Dorsolateral prefrontal cortex (tissue), 120 donors: ENCODE measurements at regions of chr1 and their contacts with region 1.

Region 1: DNA sequence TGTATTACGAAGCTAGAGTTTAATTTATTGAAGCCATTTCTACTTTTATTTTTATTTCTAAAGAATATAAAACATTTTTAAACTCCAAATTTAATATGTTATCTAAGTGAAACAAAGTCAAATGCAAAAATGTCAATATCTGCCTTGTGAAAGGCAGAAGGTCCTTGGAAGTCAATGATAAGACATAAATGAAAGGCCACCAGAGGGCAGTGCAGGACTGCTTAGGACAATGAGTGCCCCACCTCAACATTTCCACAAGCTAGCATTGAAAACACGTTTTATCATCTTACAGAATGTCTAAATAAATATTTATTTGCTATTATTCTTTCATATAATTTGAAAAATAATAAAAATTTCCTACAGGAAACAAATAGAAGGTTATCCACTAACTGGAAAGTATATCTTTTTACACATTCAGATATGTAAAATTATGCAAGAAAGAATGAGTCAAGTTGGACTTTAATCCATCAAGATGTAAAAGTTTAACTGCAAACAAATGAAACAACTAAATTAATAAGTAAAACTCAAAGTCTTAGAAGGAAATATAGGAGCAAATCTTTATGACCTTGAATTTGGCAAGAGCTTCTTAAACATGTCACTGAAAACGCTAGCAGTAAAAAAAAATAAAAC is 140.1 kb upstream of the FMN2 start:
- DNase-seq: peak in 7 of 10 donors; percentile 54 to 87 (median 70)
- H3K4me3 ChIP-seq: no peak overlapping the region
- H3K27ac ChIP-seq: no peak overlapping the region
- H3K27me3 ChIP-seq: peaks cover 0 to 10% (median 0%) of the 10 kb centered on the region in 45 donors
- CTCF ChIP-seq: peak; percentile 66 to 99 (median 90)

Region 2: DNA sequence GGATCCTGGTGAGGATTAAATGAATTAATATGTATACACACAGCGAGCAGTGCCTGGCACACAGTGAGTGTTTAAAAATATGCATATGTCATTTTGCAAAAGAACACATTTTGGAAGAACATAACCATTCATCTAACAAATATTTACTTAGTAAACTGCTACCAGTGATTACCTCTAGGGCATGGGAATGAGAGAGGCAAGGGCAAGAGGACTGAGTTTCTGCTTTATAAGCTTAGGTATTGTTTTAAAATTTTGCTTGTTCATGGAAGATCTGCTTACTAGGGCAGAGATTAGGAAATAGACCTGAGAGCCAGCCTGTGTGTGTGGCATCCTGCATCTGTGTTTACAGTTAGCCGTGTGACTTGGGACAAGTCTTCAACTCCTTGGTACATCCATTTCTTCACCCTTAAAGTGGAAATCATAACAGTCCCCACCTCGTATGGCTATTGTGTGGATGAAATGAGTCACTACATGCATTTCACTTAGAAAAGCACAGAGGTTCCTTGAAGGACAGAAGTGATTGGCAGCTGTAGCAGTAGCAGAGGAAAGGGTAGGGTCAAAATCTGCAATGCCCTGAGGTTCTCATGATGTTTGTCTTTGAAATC is 58.4 kb before region 1 on chr1:
- intact Hi-C with region 1: no loop called
- DNase-seq: no peak
- H3K4me3 ChIP-seq: no peak overlapping the region
- H3K27ac ChIP-seq: peak overlapping the region in 16 of 59 donors; percentile 3 to 60 (median 38)
- H3K27me3 ChIP-seq: no peaks in the 10 kb centered on the region
- CTCF ChIP-seq: no peak

Region 3: DNA sequence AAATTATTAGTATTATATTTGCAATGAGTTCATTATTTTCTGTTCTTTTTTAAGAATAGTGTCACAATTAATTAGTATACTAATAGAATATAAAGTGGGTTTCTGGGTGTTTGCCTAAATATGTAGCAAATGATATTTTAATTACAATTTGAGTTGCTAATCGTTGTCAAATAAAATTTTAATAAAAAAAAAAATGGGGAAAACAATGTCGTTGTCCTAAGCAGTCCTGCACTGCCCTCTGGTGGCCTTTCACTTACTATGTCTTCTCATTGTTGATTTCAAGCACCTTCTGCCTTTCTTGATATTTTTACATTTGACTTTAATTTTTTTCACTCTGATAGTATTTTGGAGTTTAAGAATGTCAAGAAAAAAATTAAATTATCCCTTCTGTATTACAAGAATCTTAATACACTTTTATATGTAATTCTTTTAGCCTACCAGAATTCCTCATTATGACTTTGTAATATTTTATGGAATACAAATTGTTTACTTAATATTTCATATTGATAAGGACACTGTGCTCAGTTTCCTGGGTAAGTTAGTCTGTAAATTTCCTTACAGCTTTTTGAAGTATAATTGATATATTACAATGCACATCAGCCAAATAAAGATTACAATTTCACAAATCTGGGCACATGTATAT is 35.6 kb after region 1 on chr1:
- intact Hi-C with region 1: loop called in 1 of 2 experiments (anchors 1 kb)
- DNase-seq: peak in 4 of 10 donors; percentile 7 to 66 (median 37)
- H3K4me3 ChIP-seq: no peak overlapping the region
- H3K27ac ChIP-seq: no peak overlapping the region
- H3K27me3 ChIP-seq: peaks cover 0 to 4% (median 0%) of the 10 kb centered on the region in 45 donors
- CTCF ChIP-seq: peak; percentile 48 to 92 (median 80)